A549 (cell line): ENCODE measurements at regions of chr2 and their contacts with region 1.

Region 1: DNA sequence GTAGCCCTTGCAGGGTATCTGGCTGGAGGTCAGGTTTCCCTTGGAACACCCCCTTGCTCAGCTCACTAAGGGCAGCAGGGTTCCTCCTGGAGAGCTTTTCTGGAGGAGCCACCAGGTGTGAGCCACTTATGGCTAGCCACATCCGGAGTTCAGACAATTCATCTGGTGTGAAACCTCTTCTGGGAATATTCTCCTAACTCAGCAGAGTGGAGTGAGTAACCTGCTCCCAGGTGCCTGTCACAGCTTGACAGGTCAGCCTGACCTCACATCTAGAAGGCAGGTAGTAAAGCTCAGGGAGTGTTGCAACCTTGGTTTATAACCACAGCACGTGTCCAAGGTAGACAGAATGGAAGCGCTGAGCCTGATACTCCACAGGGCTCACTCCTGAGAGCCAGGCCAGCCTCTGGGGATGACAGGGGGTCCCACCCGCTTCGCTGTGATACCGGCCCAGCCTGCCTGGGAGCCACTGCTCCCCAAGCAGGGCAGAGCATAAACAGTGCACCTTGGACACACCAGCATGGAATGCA is 62.6 kb upstream of the TGFA start:
- DNase-seq: no peak
- ATAC-seq: no peak
- H3K4me3 ChIP-seq: no peak overlapping the region
- H3K27ac ChIP-seq: no peak overlapping the region
- H3K4me1 ChIP-seq: no peaks in the 10 kb centered on the region
- CTCF ChIP-seq: no peak
- EP300 ChIP-seq: no peak
- POLR2A ChIP-seq: no peak
- RAD21 ChIP-seq: no peak

Region 2: GRCh38 chr2:70328921-70329561 is 287.2 kb before region 1 on chr2:
- CTCF ChIA-PET with region 1: interaction called, 13 read pairs
- POLR2A ChIA-PET with region 1: no interaction called
- DNase-seq: peak; percentile 55 to 68
- ATAC-seq: peak; percentile 82 to 85
- H3K4me3 ChIP-seq: no peak overlapping the region
- H3K27ac ChIP-seq: peak overlapping the region in 1 of 2 experiments; percentile 54; a peak in 3 of 6 replicates
- H3K4me1 ChIP-seq: peaks cover 16% of the 10 kb centered on the region
- CTCF ChIP-seq: no peak
- EP300 ChIP-seq: no peak
- POLR2A ChIP-seq: no peak
- RAD21 ChIP-seq: no peak

Region 3: GRCh38 chr2:70354264-70354949 is 261.8 kb before region 1 on chr2:
- CTCF ChIA-PET with region 1: interaction called, 20 read pairs
- POLR2A ChIA-PET with region 1: no interaction called
- DNase-seq: no peak
- ATAC-seq: peak; percentile 67 to 77; a peak in 5 of 6 replicates
- H3K4me3 ChIP-seq: no peak overlapping the region
- H3K27ac ChIP-seq: peak overlapping the region; percentile 7 to 49; a peak in 5 of 6 replicates
- H3K4me1 ChIP-seq: peaks cover 25% of the 10 kb centered on the region
- CTCF ChIP-seq: no peak
- EP300 ChIP-seq: no peak
- POLR2A ChIP-seq: no peak
- RAD21 ChIP-seq: no peak

Region 4: GRCh38 chr2:70580352-70580751 is 35.9 kb before region 1 on chr2:
- CTCF ChIA-PET with region 1: interaction called, 22 read pairs
- POLR2A ChIA-PET with region 1: no interaction called
- DNase-seq: no peak
- ATAC-seq: no peak
- H3K4me3 ChIP-seq: no peak overlapping the region
- H3K27ac ChIP-seq: no peak overlapping the region
- H3K4me1 ChIP-seq: no peaks in the 10 kb centered on the region
- CTCF ChIP-seq: no peak
- EP300 ChIP-seq: no peak
- POLR2A ChIP-seq: no peak
- RAD21 ChIP-seq: no peak

Region 5: GRCh38 chr2:70641263-70641784 is 25.1 kb after region 1 on chr2:
- CTCF ChIA-PET with region 1: interaction called, 42 read pairs
- POLR2A ChIA-PET with region 1: no interaction called
- DNase-seq: no peak
- ATAC-seq: no peak
- H3K4me3 ChIP-seq: no peak overlapping the region
- H3K27ac ChIP-seq: no peak overlapping the region
- H3K4me1 ChIP-seq: no peaks in the 10 kb centered on the region
- CTCF ChIP-seq: no peak
- EP300 ChIP-seq: no peak
- POLR2A ChIP-seq: no peak
- RAD21 ChIP-seq: no peak

Region 6: GRCh38 chr2:70726947-70727725 is 110.9 kb after region 1 on chr2:
- CTCF ChIA-PET with region 1: no interaction called
- POLR2A ChIA-PET with region 1: no interaction called
- DNase-seq: no peak
- ATAC-seq: peak; percentile 36 to 45; a peak in 2 of 6 replicates
- H3K4me3 ChIP-seq: no peak overlapping the region
- H3K27ac ChIP-seq: no peak overlapping the region
- H3K4me1 ChIP-seq: no peaks in the 10 kb centered on the region
- CTCF ChIP-seq: no peak
- EP300 ChIP-seq: no peak
- POLR2A ChIP-seq: no peak
- RAD21 ChIP-seq: no peak